BJ (cell line): ENCODE measurements at regions of chrX and their contacts with region 1.

Region 1: GRCh38 chrX:103211012-103211715 is 3.7 kb upstream of the BEX4 start:
- DNase-seq: no peak
- H3K4me3 ChIP-seq: no peak overlapping the region
- H3K27me3 ChIP-seq: no peaks in the 10 kb centered on the region; the same call in 1 of the 2 replicates
- CTCF ChIP-seq: peak; percentile 49

Region 2: GRCh38 chrX:103197721-103198306 is 13.3 kb before region 1 on chrX:
- CTCF ChIA-PET with region 1: interaction called, 10 read pairs
- POLR2A ChIA-PET with region 1: no interaction called
- DNase-seq: peak; percentile 35
- H3K4me3 ChIP-seq: no peak overlapping the region
- H3K27me3 ChIP-seq: no peaks in the 10 kb centered on the region
- CTCF ChIP-seq: no peak

Region 3: GRCh38 chrX:103276539-103277002 is 65.4 kb after region 1 on chrX and contains the start of gene TCEAL5:
- CTCF ChIA-PET with region 1: no interaction called
- POLR2A ChIA-PET with region 1: no interaction called
- DNase-seq: no peak
- H3K4me3 ChIP-seq: no peak within 1 kb of the TSS
- H3K27me3 ChIP-seq: peaks cover 16% of the 10 kb centered on the region
- CTCF ChIP-seq: no peak
- polyA plus RNA-seq, gene TCEAL5: not detected in 2 replicates

Region 4: GRCh38 chrX:103488794-103489193 is 277.6 kb after region 1 on chrX:
- CTCF ChIA-PET with region 1: interaction called, 11 read pairs
- POLR2A ChIA-PET with region 1: no interaction called
- DNase-seq: no peak
- H3K4me3 ChIP-seq: no peak overlapping the region
- H3K27me3 ChIP-seq: no peaks in the 10 kb centered on the region
- CTCF ChIP-seq: no peak